ENCODE measurements at regions of chr9 and their contacts with region 1.

Region 1: DNA sequence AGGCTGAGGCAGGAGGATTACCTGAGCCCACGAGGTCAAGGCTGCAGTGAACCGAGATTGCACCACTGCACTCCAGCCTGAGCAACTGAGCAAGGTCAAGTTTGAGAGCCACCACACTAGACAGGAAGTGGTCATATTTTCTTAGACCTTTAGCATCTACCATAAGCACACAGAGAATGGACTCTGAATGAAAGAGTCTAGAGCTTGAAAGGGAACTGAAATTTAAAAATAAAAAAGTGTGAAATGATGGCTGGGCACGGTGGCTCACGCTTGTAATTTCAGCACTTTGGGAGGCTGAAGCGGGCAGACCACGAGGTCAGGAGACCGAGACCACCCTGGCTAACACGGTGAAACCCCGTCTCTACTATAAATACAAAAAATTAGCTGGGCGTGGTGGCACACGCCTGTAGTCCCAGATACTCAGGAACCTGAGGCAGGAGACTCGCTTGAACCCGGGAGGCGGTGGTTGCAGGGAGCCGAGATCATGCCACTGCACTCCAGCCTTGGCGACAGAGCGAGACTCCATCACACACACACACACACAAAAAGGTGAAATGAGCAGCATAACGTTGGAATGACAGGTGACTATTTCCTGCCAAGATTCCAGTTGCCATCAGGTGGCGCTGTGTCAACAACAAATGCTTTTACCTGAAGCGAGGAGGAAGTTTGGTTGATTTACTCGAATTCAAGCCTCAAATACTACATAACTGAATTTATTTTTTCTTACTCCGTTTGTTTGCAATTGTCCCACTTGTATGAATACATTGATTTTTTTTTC is 21.3 kb upstream of the AK3 start:
- DNase-seq: peak; percentile 88
- ATAC-seq: peak; percentile 67

Region 2: GRCh38 chr9:3981897-3982296 is 780.4 kb before region 1 on chr9:
- intact Hi-C with region 1: no loop called
- DNase-seq: no peak
- ATAC-seq: no peak

Region 3: DNA sequence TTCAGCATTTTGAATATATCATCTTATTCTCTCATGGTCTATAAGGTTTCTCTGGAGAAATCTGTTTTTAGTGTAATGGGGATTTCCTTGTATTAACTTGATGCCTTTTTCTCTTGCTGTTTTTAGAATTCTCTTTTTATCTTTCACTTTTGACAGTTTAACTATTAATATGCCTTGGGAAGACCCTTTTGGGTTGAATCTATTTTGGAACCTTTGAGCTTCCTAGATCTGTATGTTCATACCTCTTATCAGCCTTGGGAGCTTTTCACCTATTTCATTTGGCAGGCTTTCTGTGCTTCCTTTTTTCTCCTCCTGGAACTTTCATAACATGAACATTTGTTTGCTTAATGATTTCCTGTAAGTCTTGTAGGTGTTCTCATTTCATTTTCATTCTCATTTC is 52.6 kb after region 1 on chr9:
- intact Hi-C with region 1: no loop called
- DNase-seq: no peak
- ATAC-seq: no peak

Region 4: GRCh38 chr9:4984621-4985385 is 222.5 kb after region 1 on chr9 and contains the start of gene JAK2:
- intact Hi-C with region 1: loop called (anchors 10 kb)
- DNase-seq: peak; percentile 94
- ATAC-seq: peak; percentile 96
- total RNA-seq, gene JAK2: 28.4 TPM